Activated CD4-positive, alpha-beta memory T cell treated with anti-CD3 and anti-CD28 coated beads for 36 hours (primary cell): ENCODE measurements at regions of chr9 and their contacts with region 1.

Region 1: GRCh38 chr9:109972026-109972882 is 192.3 kb downstream of the PALM2AKAP2 start:
- DNase-seq: peak; percentile 42
- H3K4me3 Mint-ChIP-seq: no peak overlapping the region
- H3K27ac Mint-ChIP-seq: no peak overlapping the region
- H3K4me1 Mint-ChIP-seq: peaks cover 79% of the 10 kb centered on the region
- H3K27me3 Mint-ChIP-seq: no peaks in the 10 kb centered on the region

Region 2: GRCh38 chr9:109834855-109835254 is 137.4 kb before region 1 on chr9:
- CTCF ChIA-PET with region 1: no interaction called
- POLR2A ChIA-PET with region 1: no interaction called
- intact Hi-C with region 1: no loop called
- DNase-seq: no peak
- H3K4me3 Mint-ChIP-seq: no peak overlapping the region
- H3K27ac Mint-ChIP-seq: no peak overlapping the region
- H3K4me1 Mint-ChIP-seq: no peaks in the 10 kb centered on the region
- H3K27me3 Mint-ChIP-seq: peaks cover 14% of the 10 kb centered on the region

Region 3: DNA sequence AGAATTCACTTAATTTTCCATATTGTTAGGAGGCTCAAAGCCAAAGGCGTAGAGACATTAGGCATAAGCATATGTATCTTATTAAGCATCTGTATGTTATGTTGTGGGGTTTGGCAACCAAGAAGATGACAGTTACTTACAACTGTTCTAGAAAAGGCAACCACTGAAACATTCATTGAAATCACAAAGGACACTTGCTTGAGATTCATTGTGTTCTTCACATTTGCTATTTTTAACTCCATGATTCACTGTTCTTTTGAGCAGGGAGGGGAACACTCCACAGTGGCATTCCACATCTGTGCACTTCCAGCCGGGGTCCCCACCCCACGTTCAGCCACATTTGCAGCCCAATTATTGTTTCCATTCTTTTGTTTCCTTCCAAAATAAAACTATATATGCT is 85.2 kb before region 1 on chr9:
- CTCF ChIA-PET with region 1: no interaction called
- POLR2A ChIA-PET with region 1: no interaction called
- intact Hi-C with region 1: loop called (anchors 1 kb)
- DNase-seq: no peak
- H3K4me3 Mint-ChIP-seq: no peak overlapping the region
- H3K27ac Mint-ChIP-seq: peak overlapping the region; percentile 84
- H3K4me1 Mint-ChIP-seq: peaks cover 50% of the 10 kb centered on the region
- H3K27me3 Mint-ChIP-seq: peaks cover 1% of the 10 kb centered on the region

Region 4: GRCh38 chr9:109918339-109919163 is 53.7 kb before region 1 on chr9:
- CTCF ChIA-PET with region 1: interaction called, 3 read pairs
- POLR2A ChIA-PET with region 1: interaction called, 5 read pairs
- intact Hi-C with region 1: loop called (anchors 1 kb)
- DNase-seq: peak; percentile 75
- H3K4me3 Mint-ChIP-seq: peak overlapping the region; percentile 58
- H3K27ac Mint-ChIP-seq: peak overlapping the region; percentile 97
- H3K4me1 Mint-ChIP-seq: peaks cover 29% of the 10 kb centered on the region
- H3K27me3 Mint-ChIP-seq: peaks cover 1% of the 10 kb centered on the region

Region 5: GRCh38 chr9:109950710-109951443 is 21.4 kb before region 1 on chr9:
- CTCF ChIA-PET with region 1: interaction called, 7 read pairs
- POLR2A ChIA-PET with region 1: interaction called, 14 read pairs
- intact Hi-C with region 1: loop called (anchors 1 kb)
- DNase-seq: peak; percentile 64
- H3K4me3 Mint-ChIP-seq: peak overlapping the region; percentile 23
- H3K27ac Mint-ChIP-seq: peak overlapping the region; percentile 82
- H3K4me1 Mint-ChIP-seq: peaks cover 30% of the 10 kb centered on the region
- H3K27me3 Mint-ChIP-seq: no peaks in the 10 kb centered on the region

Region 6: GRCh38 chr9:109986521-109986991 is 14.3 kb after region 1 on chr9:
- CTCF ChIA-PET with region 1: no interaction called
- POLR2A ChIA-PET with region 1: no interaction called
- intact Hi-C with region 1: no loop called
- DNase-seq: no peak
- H3K4me3 Mint-ChIP-seq: no peak overlapping the region
- H3K27ac Mint-ChIP-seq: no peak overlapping the region
- H3K4me1 Mint-ChIP-seq: peaks cover 3% of the 10 kb centered on the region
- H3K27me3 Mint-ChIP-seq: no peaks in the 10 kb centered on the region

Region 7: GRCh38 chr9:110036279-110036678 is 64.0 kb after region 1 on chr9:
- CTCF ChIA-PET with region 1: no interaction called
- POLR2A ChIA-PET with region 1: no interaction called
- intact Hi-C with region 1: no loop called
- DNase-seq: no peak
- H3K4me3 Mint-ChIP-seq: no peak overlapping the region
- H3K27ac Mint-ChIP-seq: no peak overlapping the region
- H3K4me1 Mint-ChIP-seq: no peaks in the 10 kb centered on the region
- H3K27me3 Mint-ChIP-seq: no peaks in the 10 kb centered on the region

Region 8: GRCh38 chr9:110048403-110048975 is 76.2 kb after region 1 on chr9:
- CTCF ChIA-PET with region 1: interaction called, 4 read pairs
- POLR2A ChIA-PET with region 1: interaction called, 6 read pairs
- intact Hi-C with region 1: loop called (anchors 1 kb)
- DNase-seq: peak; percentile 89
- H3K4me3 Mint-ChIP-seq: peak overlapping the region; percentile 90
- H3K27ac Mint-ChIP-seq: peak overlapping the region; percentile 72
- H3K4me1 Mint-ChIP-seq: peaks cover 39% of the 10 kb centered on the region
- H3K27me3 Mint-ChIP-seq: peaks cover 13% of the 10 kb centered on the region

Region 9: GRCh38 chr9:110125207-110125751 is 153.0 kb after region 1 on chr9:
- CTCF ChIA-PET with region 1: no interaction called
- POLR2A ChIA-PET with region 1: no interaction called
- intact Hi-C with region 1: no loop called
- DNase-seq: no peak
- H3K4me3 Mint-ChIP-seq: no peak overlapping the region
- H3K27ac Mint-ChIP-seq: no peak overlapping the region
- H3K4me1 Mint-ChIP-seq: peaks cover 16% of the 10 kb centered on the region
- H3K27me3 Mint-ChIP-seq: no peaks in the 10 kb centered on the region